ENCODE measurements at regions of chr1 and their contacts with region 1.

Region 1: GRCh38 chr1:161549652-161550051 is at the start of gene FCGR3A:
- DNase-seq: no peak
- H3K4me3 Mint-ChIP-seq: no peak within 1 kb of the TSS
- H3K27ac Mint-ChIP-seq: no peak within 1 kb of the TSS
- H3K4me1 Mint-ChIP-seq: no peaks in the 10 kb centered on the region
- H3K27me3 Mint-ChIP-seq: peaks cover 2% of the 10 kb centered on the region
- CTCF ChIP-seq: no peak
- total RNA-seq, gene FCGR3A: not detected in 2 replicates

Region 2: DNA sequence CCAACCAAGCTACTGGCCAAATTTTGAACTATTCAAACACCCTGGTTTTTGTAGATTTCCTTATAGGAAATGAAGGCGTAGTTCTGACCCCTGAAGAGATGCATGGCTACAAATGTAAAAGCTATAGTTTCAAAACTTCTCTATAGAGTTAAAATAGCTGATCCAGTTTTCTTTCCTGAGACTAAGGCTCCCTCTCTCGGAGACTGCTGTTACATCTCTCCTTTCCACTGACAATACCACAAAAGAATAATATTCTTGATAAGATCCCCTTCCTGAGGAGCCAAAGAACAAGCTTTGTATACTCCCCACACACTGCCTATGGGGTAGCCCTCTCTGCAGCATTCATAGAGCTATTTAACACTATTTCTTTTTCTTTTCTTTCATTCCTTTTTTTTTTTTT is 175.3 kb before region 1 on chr1:
- CTCF ChIA-PET with region 1: no interaction called
- intact Hi-C with region 1: no loop called
- DNase-seq: no peak
- H3K4me3 Mint-ChIP-seq: no peak overlapping the region
- H3K27ac Mint-ChIP-seq: no peak overlapping the region
- H3K4me1 Mint-ChIP-seq: no peaks in the 10 kb centered on the region
- H3K27me3 Mint-ChIP-seq: no peaks in the 10 kb centered on the region
- CTCF ChIP-seq: no peak

Region 3: DNA sequence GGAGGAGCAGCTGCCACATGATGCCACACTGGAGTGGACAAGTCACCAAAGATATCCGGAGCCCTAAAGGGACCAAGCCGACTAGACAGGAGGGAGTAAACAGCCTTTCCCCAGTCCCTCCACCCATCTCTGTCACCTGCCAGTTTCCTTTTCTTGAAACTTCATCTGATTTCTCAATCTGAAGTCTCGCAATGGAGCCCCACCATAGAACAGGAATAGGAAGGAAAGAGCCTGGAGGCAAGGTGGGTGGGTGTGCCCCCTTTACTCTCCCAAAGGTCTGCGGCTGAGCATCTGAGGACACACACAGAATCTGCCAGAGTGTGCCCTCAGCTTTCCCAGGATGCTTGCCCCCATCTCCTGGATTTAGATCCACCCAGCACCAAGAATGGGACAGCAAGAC is 81.4 kb after region 1 on chr1 and contains the start of gene FCGR3B:
- CTCF ChIA-PET with region 1: no interaction called
- intact Hi-C with region 1: loop called (anchors 10 kb)
- DNase-seq: no peak
- H3K4me3 Mint-ChIP-seq: no peak within 1 kb of the TSS
- H3K27ac Mint-ChIP-seq: no peak within 1 kb of the TSS
- H3K4me1 Mint-ChIP-seq: no peaks in the 10 kb centered on the region
- H3K27me3 Mint-ChIP-seq: peaks cover 7% of the 10 kb centered on the region
- CTCF ChIP-seq: no peak
- total RNA-seq, gene FCGR3B: not detected in 2 replicates

Region 4: GRCh38 chr1:161676958-161677689 is 127.5 kb after region 1 on chr1:
- CTCF ChIA-PET with region 1: no interaction called
- intact Hi-C with region 1: no loop called
- DNase-seq: peak; percentile 14
- H3K4me3 Mint-ChIP-seq: no peak overlapping the region
- H3K27ac Mint-ChIP-seq: no peak overlapping the region
- H3K4me1 Mint-ChIP-seq: peaks cover 16% of the 10 kb centered on the region
- H3K27me3 Mint-ChIP-seq: peaks cover 11% of the 10 kb centered on the region
- CTCF ChIP-seq: no peak

Region 5: DNA sequence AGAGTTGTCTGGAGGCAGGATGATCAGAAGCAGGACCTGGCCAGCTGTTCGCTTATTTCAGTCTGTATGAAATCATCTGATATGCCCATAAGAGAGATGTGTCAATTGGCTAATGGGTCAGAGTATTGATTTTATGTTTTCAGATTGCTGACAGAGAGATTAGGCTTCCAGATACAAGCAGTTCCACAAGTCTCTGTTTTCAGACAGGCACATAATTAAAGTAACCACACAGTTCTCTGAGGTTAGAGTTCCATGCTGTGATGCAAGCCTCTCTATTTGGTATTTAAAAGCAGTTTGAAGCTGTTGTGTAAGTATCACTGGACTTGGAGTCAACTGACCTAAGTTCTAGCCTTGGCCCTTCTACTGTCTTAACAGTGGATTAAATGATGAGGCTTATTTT is 266.5 kb after region 1 on chr1:
- CTCF ChIA-PET with region 1: no interaction called
- intact Hi-C with region 1: no loop called
- DNase-seq: no peak
- H3K4me3 Mint-ChIP-seq: no peak overlapping the region
- H3K27ac Mint-ChIP-seq: no peak overlapping the region
- H3K4me1 Mint-ChIP-seq: no peaks in the 10 kb centered on the region
- H3K27me3 Mint-ChIP-seq: no peaks in the 10 kb centered on the region
- CTCF ChIP-seq: no peak